Mucosa of descending colon (tissue), 3 donors: ENCODE measurements at regions of chr7 and their contacts with region 1.

Region 1: DNA sequence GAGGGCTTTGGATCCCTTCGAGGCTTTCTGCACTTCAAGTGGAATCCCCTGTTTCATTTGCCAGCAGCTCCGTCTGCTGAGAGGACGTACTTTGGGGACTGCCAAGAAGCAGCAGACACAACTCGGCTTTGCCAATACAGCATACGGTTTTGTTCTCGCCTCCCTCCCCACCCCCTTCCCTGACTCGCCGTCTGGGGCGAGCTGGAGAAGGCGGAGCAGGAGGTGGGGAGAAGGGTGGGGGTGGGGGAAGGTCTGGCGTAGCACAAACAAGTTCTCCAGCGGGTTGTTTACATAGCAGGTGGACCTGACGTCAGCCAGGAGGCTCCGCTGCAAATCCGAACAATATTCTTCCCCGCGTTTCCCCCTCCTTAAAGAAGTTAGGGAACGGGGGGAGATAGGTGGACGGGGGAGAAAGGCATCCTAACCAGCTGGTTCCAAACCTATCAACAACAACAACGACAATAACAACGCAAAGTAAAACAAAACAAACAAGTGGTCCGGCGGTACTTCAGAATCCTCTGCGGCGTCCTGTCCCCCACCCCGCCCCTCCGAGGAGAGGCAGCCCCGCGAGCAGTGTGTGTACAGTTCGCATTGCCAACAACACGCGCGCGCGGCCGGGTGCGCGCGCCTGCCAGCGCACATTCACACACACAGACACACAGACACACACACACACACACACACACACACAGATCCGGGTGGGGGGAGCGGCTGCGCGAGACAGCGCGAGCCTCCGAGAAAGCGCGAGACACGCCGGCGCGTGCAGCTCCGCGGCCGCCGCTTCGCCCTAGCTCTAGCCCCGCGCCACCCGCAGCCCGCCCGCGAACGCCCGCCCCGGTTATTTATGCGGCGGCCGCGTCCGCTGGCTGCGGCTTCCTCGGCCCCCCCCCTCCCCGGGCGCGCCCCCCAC is 167.0 kb upstream of the PPP1R3A start:
- DNase-seq: peak; percentile 88 to 92 (median 89)
- ATAC-seq: peak; percentile 77
- H3K4me3 ChIP-seq: peak overlapping the region; percentile 42
- H3K4me1 ChIP-seq: peaks cover 14% of the 10 kb centered on the region
- CTCF ChIP-seq: no peak

Region 2: GRCh38 chr7:113936982-113937381 is 148.9 kb before region 1 on chr7:
- intact Hi-C with region 1: no loop called
- DNase-seq: no peak
- ATAC-seq: no peak
- H3K4me3 ChIP-seq: no peak overlapping the region
- H3K4me1 ChIP-seq: no peaks in the 10 kb centered on the region
- CTCF ChIP-seq: no peak

Region 3: GRCh38 chr7:114141415-114141814 is 55.6 kb after region 1 on chr7:
- intact Hi-C with region 1: no loop called
- DNase-seq: no peak
- ATAC-seq: no peak
- H3K4me3 ChIP-seq: no peak overlapping the region
- H3K4me1 ChIP-seq: no peaks in the 10 kb centered on the region
- CTCF ChIP-seq: no peak

Region 4: DNA sequence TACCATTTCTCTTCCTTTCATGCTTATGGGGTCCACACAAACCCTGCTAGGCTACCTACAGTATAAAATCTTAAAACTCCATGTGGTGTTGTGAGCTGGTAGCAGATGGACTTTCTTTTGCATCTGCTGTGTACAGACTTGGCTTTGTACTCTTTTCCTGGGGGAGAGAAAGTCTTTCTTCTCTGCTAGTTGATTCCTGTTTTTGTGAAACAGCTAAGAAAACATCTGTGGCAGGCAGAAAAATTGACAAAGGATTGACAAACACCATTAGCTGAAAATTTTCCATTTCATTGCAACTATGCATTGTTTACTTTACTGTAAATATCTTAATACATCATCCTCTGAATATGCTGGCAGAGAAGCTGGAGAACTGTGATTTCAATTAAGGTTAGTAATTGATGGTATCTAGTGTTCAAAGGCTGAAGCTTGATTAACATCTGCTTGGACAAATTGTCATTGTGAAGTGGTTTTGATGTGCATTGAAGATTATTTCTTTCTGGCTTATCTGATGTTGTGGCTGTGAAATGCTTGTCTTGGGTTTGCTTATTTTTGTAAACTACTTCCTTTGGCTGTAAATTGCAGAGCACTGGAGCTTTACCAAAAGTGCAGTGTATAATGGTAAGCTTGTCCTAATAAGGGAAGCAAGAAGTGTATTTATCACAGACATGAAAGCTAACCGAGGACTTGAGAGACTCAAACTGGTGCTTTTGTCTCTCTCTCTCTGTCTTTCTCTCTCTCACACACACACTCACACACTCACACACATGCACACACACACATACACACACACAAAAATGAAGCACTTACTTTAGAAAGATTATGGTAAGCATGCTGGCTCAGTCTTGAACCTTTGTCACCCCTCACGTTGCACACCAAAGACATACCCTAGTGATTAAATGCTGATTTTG is 328.6 kb after region 1 on chr7 and contains the start of gene FOXP2:
- intact Hi-C with region 1: loop called (anchors 2 to 5 kb)
- DNase-seq: no peak
- ATAC-seq: peak; percentile 55
- H3K4me3 ChIP-seq: no peak within 1 kb of the TSS
- H3K4me1 ChIP-seq: peaks cover 16% of the 10 kb centered on the region
- CTCF ChIP-seq: no peak
- total RNA-seq, gene FOXP2: 14.9 to 88.0 (median 17.2) TPM

Region 5: GRCh38 chr7:114663502-114663901 is 577.7 kb after region 1 on chr7:
- intact Hi-C with region 1: loop called in 1 of 2 experiments (anchors 10 kb)
- DNase-seq: peak in 1 of 3 donors; percentile 63
- ATAC-seq: peak; percentile 36
- H3K4me3 ChIP-seq: no peak overlapping the region
- H3K4me1 ChIP-seq: no peaks in the 10 kb centered on the region
- CTCF ChIP-seq: no peak